ENCODE measurements at regions of chr17 and their contacts with region 1.

Region 1: DNA sequence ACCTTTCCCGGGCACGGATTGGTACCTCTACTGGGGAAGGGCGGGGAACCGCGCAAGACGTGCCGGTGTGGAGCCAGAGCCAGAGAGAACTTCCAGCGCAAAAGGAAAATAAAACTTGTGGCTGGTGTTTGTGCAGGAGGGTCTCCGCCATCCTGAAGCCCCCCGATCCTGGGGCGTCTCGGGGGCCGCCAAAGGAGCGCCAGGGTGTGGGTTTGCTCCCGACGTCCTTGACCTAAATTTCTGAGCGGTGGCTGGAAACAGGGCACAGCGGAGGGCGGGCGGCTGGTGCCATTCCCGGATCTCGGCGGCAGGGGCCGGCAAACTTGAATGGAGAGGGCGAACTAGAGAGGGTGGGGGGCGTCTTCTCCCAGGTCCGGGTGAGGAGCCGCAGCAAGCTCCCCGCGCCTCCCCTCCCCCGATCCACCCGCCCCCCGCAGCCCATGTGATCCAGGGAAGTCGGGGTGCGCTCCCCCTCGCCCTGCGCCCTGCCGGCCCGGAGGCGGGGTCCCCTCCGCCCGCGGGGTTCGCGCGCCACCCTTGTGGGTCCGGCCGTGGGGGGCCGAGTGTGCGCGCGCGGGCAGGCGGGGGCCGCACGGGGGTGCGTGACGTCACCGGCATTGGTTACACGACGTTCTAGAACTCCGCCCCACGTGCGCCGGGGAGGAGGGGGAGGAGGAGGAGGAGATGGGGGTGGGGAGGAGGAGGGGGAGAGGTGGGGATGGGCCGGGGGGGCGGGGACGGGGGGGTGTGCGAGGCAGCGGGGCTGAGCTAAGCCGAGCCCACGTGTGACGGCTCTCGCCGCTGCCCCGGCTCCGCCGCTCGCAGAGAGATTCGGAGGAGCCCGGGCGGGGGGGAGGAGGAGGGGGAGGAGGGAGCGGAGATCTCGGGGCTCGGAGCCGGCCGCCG is at the start of gene MSI2:
- DNase-seq: peak; percentile 94 to 95
- ATAC-seq: peak; percentile 80 to 83
- H3K4me3 ChIP-seq: peak within 1 kb of the TSS; percentile 55 to 92 (median 75)
- H3K27ac ChIP-seq: peak within 1 kb of the TSS; percentile 86 to 98 (median 96)
- H3K4me1 ChIP-seq: peaks cover 19 to 32% of the 10 kb centered on the region in 2 donors
- H3K27me3 ChIP-seq: no peaks in the 10 kb centered on the region
- CTCF ChIP-seq: no peak
- POLR2A ChIP-seq: peak; percentile 65 to 76
- total RNA-seq, gene MSI2: 33.1 to 66.2 (median 48.5) TPM

Region 2: GRCh38 chr17:57401556-57402488 is 145.8 kb after region 1 on chr17:
- in situ Hi-C with region 1: no loop called
- intact Hi-C with region 1: loop called (anchors 5 kb)
- DNase-seq: peak in 1 of 2 donors; percentile 41
- ATAC-seq: peak in 1 of 2 donors; percentile 32
- H3K4me3 ChIP-seq: no peak overlapping the region
- H3K27ac ChIP-seq: peak overlapping the region; percentile 12 to 82 (median 67)
- H3K4me1 ChIP-seq: peaks cover 43 to 63% of the 10 kb centered on the region in 2 donors
- H3K27me3 ChIP-seq: no peaks in the 10 kb centered on the region
- CTCF ChIP-seq: peak in 1 of 5 experiments; percentile 13
- POLR2A ChIP-seq: no peak

Region 3: DNA sequence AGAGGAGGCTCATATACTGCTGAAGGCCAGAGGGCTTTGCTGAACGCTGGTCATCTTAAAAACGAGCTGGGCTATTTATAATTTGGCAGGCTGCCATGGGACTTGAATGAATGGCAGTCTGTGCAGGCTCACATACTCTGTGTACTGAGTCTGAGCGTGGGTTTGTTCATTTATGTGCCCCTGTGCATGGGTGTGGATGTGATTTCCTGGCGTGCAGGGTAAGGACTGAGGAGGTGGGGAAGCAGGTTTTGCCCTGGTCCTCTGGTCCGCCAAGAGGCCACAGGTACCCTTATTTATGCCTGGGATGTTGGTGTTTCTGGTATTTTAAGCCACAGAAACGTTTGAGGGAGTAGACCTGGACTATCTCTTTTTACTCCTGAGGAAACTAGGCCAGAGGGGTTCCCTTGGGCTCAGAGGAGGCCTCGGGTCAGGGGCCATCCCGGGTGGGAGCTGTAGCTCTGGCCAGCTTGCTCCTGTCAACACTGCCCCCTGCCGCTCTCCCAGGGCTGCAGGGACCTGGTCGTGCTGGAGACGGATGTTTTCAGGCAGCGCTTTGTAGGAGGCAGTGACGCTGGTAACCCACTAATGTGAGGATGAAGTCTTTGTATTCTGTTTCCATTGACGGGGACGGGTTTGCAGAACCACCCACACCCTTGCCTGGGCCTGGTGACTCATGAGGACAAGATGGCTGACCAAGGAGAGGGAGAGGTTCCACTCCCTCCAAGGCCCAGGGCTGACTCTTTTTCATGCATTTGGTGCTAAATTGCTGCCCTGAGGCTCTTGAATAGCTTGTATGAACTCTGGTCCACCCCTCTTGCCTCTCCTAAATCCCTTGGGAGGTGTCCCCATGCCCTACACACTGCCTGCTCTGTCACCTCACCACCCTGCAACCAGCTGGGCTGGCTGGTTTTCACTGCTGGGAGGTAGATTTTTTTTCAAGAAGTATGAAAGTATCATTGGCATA is 184.8 kb after region 1 on chr17:
- in situ Hi-C with region 1: no loop called
- intact Hi-C with region 1: loop called (anchors 5 kb)
- DNase-seq: peak; percentile 58 to 75
- ATAC-seq: peak; percentile 76 to 79
- H3K4me3 ChIP-seq: no peak overlapping the region
- H3K27ac ChIP-seq: peak overlapping the region; percentile 90 to 96 (median 92)
- H3K4me1 ChIP-seq: peaks cover 78 to 85% of the 10 kb centered on the region in 2 donors
- H3K27me3 ChIP-seq: no peaks in the 10 kb centered on the region
- CTCF ChIP-seq: peak in 2 of 5 experiments; percentile 11 to 21
- POLR2A ChIP-seq: no peak

Region 4: DNA sequence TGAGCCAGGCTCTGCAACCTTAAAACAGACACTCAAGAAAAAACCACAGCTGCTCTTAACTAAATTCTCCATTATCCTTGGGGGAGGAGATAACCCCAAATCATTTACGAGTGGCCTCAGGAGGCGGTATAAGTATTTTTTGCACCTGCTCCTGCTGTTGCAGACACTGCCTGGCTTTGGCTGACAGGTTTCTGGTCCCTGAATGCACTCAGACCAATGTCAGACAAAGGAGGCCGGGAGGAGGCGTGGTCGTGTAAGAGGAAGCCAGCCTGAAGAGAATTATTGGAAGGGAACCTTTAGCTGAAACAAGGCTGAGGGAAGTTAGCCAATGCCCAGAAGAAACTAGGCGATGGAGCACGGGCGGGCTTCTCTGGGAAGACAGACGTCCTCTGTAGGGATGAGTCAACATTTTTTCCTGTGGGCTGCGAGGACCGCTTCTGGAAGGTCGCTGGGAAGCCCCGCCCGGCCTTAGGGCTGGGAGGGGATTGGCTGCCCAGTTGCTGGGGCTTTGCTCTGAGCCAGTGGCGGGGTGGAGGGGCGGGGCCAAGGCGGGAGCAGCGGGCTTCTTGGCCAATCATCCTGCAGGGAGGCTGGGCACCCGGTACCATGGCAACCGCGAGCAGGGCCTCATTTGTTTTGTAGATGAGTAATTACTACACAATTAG is 406.7 kb after region 1 on chr17:
- in situ Hi-C with region 1: loop called in 1 of 4 experiments (anchors 5 kb)
- intact Hi-C with region 1: no loop called
- DNase-seq: peak; percentile 86 to 95
- ATAC-seq: peak; percentile 90 to 94
- H3K4me3 ChIP-seq: peak overlapping the region; percentile 15 to 57 (median 37)
- H3K27ac ChIP-seq: peak overlapping the region; percentile 77 to 91 (median 86)
- H3K4me1 ChIP-seq: peaks cover 30 to 35% of the 10 kb centered on the region in 2 donors
- H3K27me3 ChIP-seq: no peaks in the 10 kb centered on the region
- CTCF ChIP-seq: peak in 1 of 5 experiments; percentile 19
- POLR2A ChIP-seq: peak in 1 of 2 donors; percentile 52

Region 5: GRCh38 chr17:57995076-57995956 is 739.3 kb after region 1 on chr17:
- in situ Hi-C with region 1: loop called in 1 of 4 experiments (anchors 25 kb)
- intact Hi-C with region 1: no loop called
- DNase-seq: peak; percentile 80 to 93
- ATAC-seq: peak; percentile 92 to 93
- H3K4me3 ChIP-seq: no peak overlapping the region
- H3K27ac ChIP-seq: peak overlapping the region; percentile 79 to 99 (median 98)
- H3K4me1 ChIP-seq: peaks cover 63 to 70% of the 10 kb centered on the region in 2 donors
- H3K27me3 ChIP-seq: no peaks in the 10 kb centered on the region
- CTCF ChIP-seq: peak; percentile 61 to 84 (median 75)
- POLR2A ChIP-seq: no peak

Measured in gastrocnemius medialis (tissue), 4 donors.